IMR-90 (cell line): ENCODE measurements at regions of chr6 and their contacts with region 1.

Region 1: GRCh38 chr6:57316581-57317059 is 810 bp upstream of the PRIM2 start:
- DNase-seq: peak; percentile 92
- ATAC-seq: peak; percentile 69
- H3K4me3 ChIP-seq: peak overlapping the region; percentile 90
- H3K27ac ChIP-seq: peak overlapping the region; percentile 80
- H3K4me1 ChIP-seq: peaks cover 14% of the 10 kb centered on the region
- H3K27me3 ChIP-seq: no peaks in the 10 kb centered on the region
- CTCF ChIP-seq: peak; percentile 94
- POLR2A ChIP-seq: peak; percentile 63; the same call in 1 of the 2 replicates
- RAD21 ChIP-seq: peak; percentile 98

Region 2: DNA sequence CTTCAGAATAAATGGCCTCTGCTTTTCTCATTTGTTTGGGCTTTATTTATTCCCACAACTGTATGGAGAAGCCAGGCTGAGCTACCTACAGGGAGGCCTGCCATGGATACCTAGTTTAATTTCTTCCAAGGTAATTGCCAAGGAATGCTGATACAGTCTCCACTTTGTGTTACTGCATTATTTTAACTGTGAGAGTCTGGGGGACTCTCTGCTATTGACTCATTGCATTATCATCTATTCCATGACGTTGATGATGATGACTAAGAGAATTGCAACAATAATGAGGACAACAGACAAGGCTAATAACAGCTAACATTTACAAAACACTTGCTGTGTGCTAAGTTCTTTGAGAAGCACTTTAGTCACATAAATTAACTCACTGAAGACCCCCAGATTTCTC is 980.9 kb before region 1 on chr6:
- CTCF ChIA-PET with region 1: no interaction called
- POLR2A ChIA-PET with region 1: no interaction called
- dilution Hi-C with region 1: no loop called
- in situ Hi-C with region 1: loop called (anchors 25 kb)
- intact Hi-C with region 1: no loop called
- DNase-seq: peak; percentile 94
- ATAC-seq: peak; percentile 80
- H3K4me3 ChIP-seq: no peak overlapping the region
- H3K27ac ChIP-seq: peak overlapping the region; percentile 73
- H3K4me1 ChIP-seq: peaks cover 10% of the 10 kb centered on the region
- H3K27me3 ChIP-seq: no peaks in the 10 kb centered on the region
- CTCF ChIP-seq: no peak
- POLR2A ChIP-seq: no peak
- RAD21 ChIP-seq: no peak

Region 3: DNA sequence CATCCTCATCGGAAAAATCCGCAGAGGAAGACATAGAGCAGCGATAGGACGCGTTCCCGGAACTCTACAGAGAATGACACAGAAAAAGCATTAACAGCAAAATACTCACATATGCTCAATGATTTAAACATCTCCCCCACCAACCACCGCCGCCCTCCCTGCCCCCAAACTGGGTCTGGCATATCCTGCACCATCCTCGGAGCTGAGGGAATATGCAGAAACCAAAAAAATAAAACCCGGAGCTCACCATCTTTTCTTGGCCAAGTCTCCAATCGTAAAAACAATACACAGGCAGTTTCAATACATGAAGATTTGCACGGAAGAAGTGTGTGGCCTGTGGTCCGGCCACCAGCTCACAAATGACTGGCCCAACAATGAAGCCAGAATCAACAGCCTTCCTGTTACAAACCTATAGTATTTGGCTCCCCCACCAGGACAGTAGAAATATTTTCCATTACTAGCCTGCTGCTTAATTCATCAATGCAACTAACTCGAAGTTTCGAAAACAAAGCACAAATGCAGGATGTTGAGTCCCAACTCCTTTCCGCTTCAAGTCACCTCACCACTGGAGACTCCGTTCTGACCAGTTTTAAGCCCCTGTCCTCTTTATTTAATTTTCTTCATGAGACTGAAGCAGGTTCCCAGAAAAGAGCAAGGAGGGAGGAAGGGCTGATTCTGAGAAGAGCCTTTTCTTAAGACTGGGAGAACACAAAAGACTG is 464.9 kb before region 1 on chr6:
- CTCF ChIA-PET with region 1: no interaction called
- POLR2A ChIA-PET with region 1: no interaction called
- dilution Hi-C with region 1: no loop called
- in situ Hi-C with region 1: no loop called
- intact Hi-C with region 1: loop called (anchors 5 kb)
- DNase-seq: peak; percentile 89
- ATAC-seq: peak; percentile 76
- H3K4me3 ChIP-seq: peak overlapping the region; percentile 64
- H3K27ac ChIP-seq: peak overlapping the region; percentile 92
- H3K4me1 ChIP-seq: peaks cover 16% of the 10 kb centered on the region
- H3K27me3 ChIP-seq: no peaks in the 10 kb centered on the region
- CTCF ChIP-seq: peak; percentile 68
- POLR2A ChIP-seq: peak; percentile 72
- RAD21 ChIP-seq: peak; percentile 81

Region 4: DNA sequence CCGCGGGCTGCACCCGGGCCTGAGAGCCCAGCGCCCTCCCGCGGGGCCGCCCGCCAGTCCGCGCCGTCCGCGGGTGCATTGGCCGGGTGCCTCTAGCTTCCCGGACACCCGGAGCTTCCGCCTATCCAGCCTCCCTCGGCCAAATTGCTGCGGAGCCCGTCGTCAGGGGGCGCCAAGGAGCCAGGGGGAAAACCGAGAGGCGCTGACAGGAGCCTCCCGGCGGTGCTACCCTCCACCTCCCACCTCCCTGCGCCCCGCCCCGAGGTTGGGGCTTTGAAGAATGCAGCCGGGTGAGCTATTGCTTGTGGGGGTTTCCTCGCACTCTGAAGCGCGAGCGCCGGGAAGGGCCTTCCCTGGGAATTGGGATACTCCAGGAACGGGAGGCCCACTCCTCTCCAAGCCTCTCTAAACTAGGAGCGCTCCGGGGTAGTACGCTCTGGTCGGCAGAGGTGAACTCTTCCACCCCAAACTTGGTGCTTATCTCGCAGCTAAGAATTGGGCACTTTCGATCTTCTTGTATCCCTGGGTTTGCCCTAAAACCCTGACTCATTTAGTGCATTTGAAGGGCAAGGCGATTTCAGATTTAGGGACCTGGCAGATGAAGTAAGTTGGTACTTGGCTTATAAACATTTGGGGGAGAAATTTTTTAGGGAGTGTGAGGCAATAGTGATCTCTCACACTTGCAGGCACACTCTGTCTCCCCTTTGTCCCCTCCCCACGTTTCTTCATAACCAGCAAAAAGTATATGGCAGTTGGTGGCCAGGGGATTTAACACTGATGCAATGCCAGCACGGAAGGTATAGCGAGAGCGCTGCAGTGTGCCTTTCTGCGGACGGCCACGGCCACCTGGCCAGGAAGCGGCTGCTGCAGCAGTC is 361.2 kb before region 1 on chr6:
- CTCF ChIA-PET with region 1: interaction called, 4 read pairs
- POLR2A ChIA-PET with region 1: no interaction called
- dilution Hi-C with region 1: no loop called
- in situ Hi-C with region 1: no loop called
- intact Hi-C with region 1: loop called (anchors 1 kb)
- DNase-seq: peak; percentile 91
- ATAC-seq: peak; percentile 78
- H3K4me3 ChIP-seq: peak overlapping the region; percentile 88
- H3K27ac ChIP-seq: peak overlapping the region; percentile 73
- H3K4me1 ChIP-seq: peaks cover 12% of the 10 kb centered on the region
- H3K27me3 ChIP-seq: no peaks in the 10 kb centered on the region
- CTCF ChIP-seq: peak; percentile 94
- POLR2A ChIP-seq: no peak; the same call in 1 of the 2 replicates
- RAD21 ChIP-seq: peak; percentile 72

Region 5: GRCh38 chr6:57089687-57090460 is 226.7 kb before region 1 on chr6 and contains the start of gene ZNF451:
- CTCF ChIA-PET with region 1: interaction called, 3 read pairs
- POLR2A ChIA-PET with region 1: no interaction called
- dilution Hi-C with region 1: no loop called
- in situ Hi-C with region 1: no loop called
- intact Hi-C with region 1: loop called (anchors 1 kb)
- DNase-seq: peak; percentile 95
- ATAC-seq: peak; percentile 91
- H3K4me3 ChIP-seq: peak within 1 kb of the TSS; percentile 43
- H3K27ac ChIP-seq: peak within 1 kb of the TSS; percentile 65
- H3K4me1 ChIP-seq: peaks cover 10% of the 10 kb centered on the region
- H3K27me3 ChIP-seq: no peaks in the 10 kb centered on the region
- CTCF ChIP-seq: 0 out of 2 replicates have a peak, but pooled peaks have one; percentile 8
- POLR2A ChIP-seq: peak; percentile 87
- RAD21 ChIP-seq: 0 out of 2 replicates have a peak, but pooled peaks have one; percentile 11
- total RNA-seq, gene ZNF451: 48.6 and 63.0 TPM in 2 replicates

Region 6: DNA sequence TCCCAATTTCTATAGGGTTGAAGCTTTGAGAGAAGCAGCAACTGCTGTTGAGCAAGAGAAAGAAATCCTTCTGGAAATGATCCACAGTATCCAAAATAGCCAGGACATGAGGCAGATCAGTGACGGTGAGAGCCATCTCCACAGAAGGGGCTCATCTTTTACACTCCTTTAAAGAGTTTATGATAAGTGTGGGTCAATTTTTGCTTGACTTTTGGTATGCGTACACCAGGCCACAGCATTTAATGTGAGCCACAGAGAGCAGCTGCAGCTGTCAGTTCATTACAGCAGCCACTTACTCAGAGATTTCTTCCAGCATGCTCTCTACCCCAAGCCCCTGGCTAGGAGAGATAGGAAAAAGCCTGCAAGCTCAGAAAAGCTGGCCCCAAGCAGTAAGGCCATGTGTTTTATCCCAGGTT is 134.6 kb before region 1 on chr6:
- CTCF ChIA-PET with region 1: no interaction called
- POLR2A ChIA-PET with region 1: no interaction called
- dilution Hi-C with region 1: no loop called
- in situ Hi-C with region 1: loop called (anchors 5 kb)
- intact Hi-C with region 1: loop called (anchors 2 kb)
- DNase-seq: peak; percentile 83
- ATAC-seq: peak; percentile 65
- H3K4me3 ChIP-seq: no peak overlapping the region
- H3K27ac ChIP-seq: peak overlapping the region; percentile 50; the same call in 1 of the 2 replicates
- H3K4me1 ChIP-seq: peaks cover 20% of the 10 kb centered on the region
- H3K27me3 ChIP-seq: no peaks in the 10 kb centered on the region
- CTCF ChIP-seq: no peak
- POLR2A ChIP-seq: no peak
- RAD21 ChIP-seq: no peak

Region 7: GRCh38 chr6:57221936-57222742 is 94.5 kb before region 1 on chr6 and contains the start of gene RAB23:
- CTCF ChIA-PET with region 1: no interaction called
- POLR2A ChIA-PET with region 1: no interaction called
- dilution Hi-C with region 1: no loop called
- in situ Hi-C with region 1: no loop called
- intact Hi-C with region 1: loop called (anchors 1 kb)
- DNase-seq: peak; percentile 77
- ATAC-seq: peak; percentile 79
- H3K4me3 ChIP-seq: peak within 1 kb of the TSS; percentile 85
- H3K27ac ChIP-seq: peak within 1 kb of the TSS; percentile 99
- H3K4me1 ChIP-seq: peaks cover 5% of the 10 kb centered on the region
- H3K27me3 ChIP-seq: no peaks in the 10 kb centered on the region
- CTCF ChIP-seq: no peak
- POLR2A ChIP-seq: peak; percentile 85
- RAD21 ChIP-seq: no peak
- total RNA-seq, gene RAB23: 13.3 and 28.9 TPM in 2 replicates